CD8-positive, alpha-beta memory T cell (primary cell): ENCODE measurements at regions of chr1 and their contacts with region 1.

Region 1: DNA sequence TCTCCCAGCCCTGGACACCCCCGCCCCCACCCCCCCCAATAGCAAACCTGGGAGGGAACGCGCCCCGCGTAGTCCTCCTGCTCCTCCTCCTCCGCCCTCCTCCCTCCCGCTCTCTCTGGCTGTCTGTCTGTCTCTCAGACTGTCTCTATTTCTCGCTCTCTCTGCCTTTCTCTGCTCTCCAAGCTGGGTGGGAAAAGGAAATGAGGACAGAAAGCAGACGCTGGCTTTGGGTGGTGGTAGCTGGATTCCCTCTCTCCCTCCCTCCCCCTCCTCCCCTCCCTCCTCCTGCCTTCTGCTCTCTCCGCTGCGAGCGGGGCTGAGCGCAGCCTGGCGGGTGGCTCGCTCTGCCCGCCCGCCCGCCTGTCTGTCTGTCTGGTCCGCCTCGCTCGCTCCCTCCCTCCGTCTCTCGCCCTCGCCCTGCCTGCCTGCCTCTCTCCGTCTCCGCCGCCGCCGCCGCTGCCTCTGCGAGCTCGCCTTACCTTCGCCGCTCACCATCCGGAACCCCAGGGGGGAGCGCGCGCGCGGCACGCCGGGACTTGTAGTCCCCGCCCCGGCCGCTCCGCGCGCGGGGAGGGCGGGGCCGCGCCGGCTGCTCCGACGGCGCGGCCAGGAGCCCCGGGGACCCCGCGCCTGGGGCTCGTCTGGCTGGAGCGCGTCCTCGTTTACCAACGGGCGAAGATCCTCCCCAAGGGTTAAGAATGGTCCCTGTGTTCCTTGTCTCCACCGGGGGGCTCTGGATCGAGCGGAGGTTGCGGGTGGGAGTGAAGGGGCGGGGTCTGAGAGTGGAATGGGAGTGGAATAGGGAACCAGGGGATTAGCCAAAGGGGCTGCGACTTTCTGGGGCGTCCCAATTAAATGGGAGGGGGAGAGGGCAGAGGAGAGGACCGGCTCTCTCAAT is at the start of gene AHDC1:
- DNase-seq: peak; percentile 88 to 94 (median 90)
- H3K4me3 ChIP-seq: peak within 1 kb of the TSS; percentile 72
- H3K4me3 Mint-ChIP-seq: peak within 1 kb of the TSS; percentile 86 to 95 (median 91)
- H3K27ac ChIP-seq: peak within 1 kb of the TSS; percentile 81
- H3K27ac Mint-ChIP-seq: peak within 1 kb of the TSS; percentile 74 to 98 (median 92)
- H3K4me1 ChIP-seq: peaks cover 52% of the 10 kb centered on the region
- H3K4me1 Mint-ChIP-seq: peaks cover 36 to 58% (median 44%) of the 10 kb centered on the region in 3 donors
- H3K27me3 ChIP-seq: no peaks in the 10 kb centered on the region
- H3K27me3 Mint-ChIP-seq: no peaks in the 10 kb centered on the region
- total RNA-seq, gene AHDC1: 11.5 TPM

Region 2: GRCh38 chr1:27392096-27392777 is 211.7 kb before region 1 on chr1 and contains the start of gene GPR3:
- CTCF ChIA-PET with region 1: interaction called, 10 read pairs
- POLR2A ChIA-PET with region 1: no interaction called
- DNase-seq: peak; percentile 87 to 94 (median 92)
- H3K4me3 ChIP-seq: peak within 1 kb of the TSS; percentile 69
- H3K4me3 Mint-ChIP-seq: peak within 1 kb of the TSS; percentile 30 to 88 (median 86)
- H3K27ac ChIP-seq: peak within 1 kb of the TSS; percentile 43
- H3K27ac Mint-ChIP-seq: peak within 1 kb of the TSS in 7 of 8 donors; percentile 0 to 95 (median 93)
- H3K4me1 ChIP-seq: peaks cover 17% of the 10 kb centered on the region
- H3K4me1 Mint-ChIP-seq: peaks cover 15 to 22% (median 21%) of the 10 kb centered on the region in 3 donors
- H3K27me3 ChIP-seq: no peaks in the 10 kb centered on the region
- H3K27me3 Mint-ChIP-seq: peaks cover 1 to 12% of the 10 kb centered on the region in 2 donors
- total RNA-seq, gene GPR3: 3.3 to 3.9 TPM

Region 3: GRCh38 chr1:27556781-27557595 is 46.9 kb before region 1 on chr1:
- CTCF ChIA-PET with region 1: interaction called, 67 read pairs
- POLR2A ChIA-PET with region 1: interaction called, 3 read pairs
- DNase-seq: peak; percentile 58 to 82 (median 69)
- H3K4me3 ChIP-seq: peak overlapping the region; percentile 36
- H3K4me3 Mint-ChIP-seq: peak overlapping the region in 5 of 7 donors; percentile 1 to 42 (median 17)
- H3K27ac ChIP-seq: peak overlapping the region; percentile 25
- H3K27ac Mint-ChIP-seq: peak overlapping the region; percentile 12 to 82 (median 47)
- H3K4me1 ChIP-seq: peaks cover 26% of the 10 kb centered on the region
- H3K4me1 Mint-ChIP-seq: peaks cover 20 to 36% (median 20%) of the 10 kb centered on the region in 3 donors
- H3K27me3 ChIP-seq: no peaks in the 10 kb centered on the region
- H3K27me3 Mint-ChIP-seq: no peaks in the 10 kb centered on the region

Region 4: GRCh38 chr1:27583479-27583878 is 20.5 kb before region 1 on chr1:
- CTCF ChIA-PET with region 1: no interaction called
- POLR2A ChIA-PET with region 1: no interaction called
- DNase-seq: no peak
- H3K4me3 ChIP-seq: no peak overlapping the region
- H3K4me3 Mint-ChIP-seq: no peak overlapping the region
- H3K27ac ChIP-seq: no peak overlapping the region
- H3K27ac Mint-ChIP-seq: peak overlapping the region in 3 of 8 donors; percentile 34 to 77 (median 45)
- H3K4me1 ChIP-seq: no peaks in the 10 kb centered on the region
- H3K4me1 Mint-ChIP-seq: peaks cover 0 to 8% (median 7%) of the 10 kb centered on the region in 3 donors
- H3K27me3 ChIP-seq: no peaks in the 10 kb centered on the region
- H3K27me3 Mint-ChIP-seq: no peaks in the 10 kb centered on the region

Region 5: GRCh38 chr1:27616441-27616840 is 12.5 kb after region 1 on chr1:
- CTCF ChIA-PET with region 1: interaction called, 22 read pairs
- POLR2A ChIA-PET with region 1: interaction called, 3 read pairs
- DNase-seq: no peak
- H3K4me3 ChIP-seq: no peak overlapping the region
- H3K4me3 Mint-ChIP-seq: peak overlapping the region in 1 of 7 donors; percentile 38
- H3K27ac ChIP-seq: peak overlapping the region; percentile 13
- H3K27ac Mint-ChIP-seq: peak overlapping the region; percentile 73 to 97 (median 83)
- H3K4me1 ChIP-seq: peaks cover 65% of the 10 kb centered on the region
- H3K4me1 Mint-ChIP-seq: peaks cover 50 to 76% (median 57%) of the 10 kb centered on the region in 3 donors
- H3K27me3 ChIP-seq: no peaks in the 10 kb centered on the region
- H3K27me3 Mint-ChIP-seq: peaks cover 0 to 3% of the 10 kb centered on the region in 2 donors

Region 6: DNA sequence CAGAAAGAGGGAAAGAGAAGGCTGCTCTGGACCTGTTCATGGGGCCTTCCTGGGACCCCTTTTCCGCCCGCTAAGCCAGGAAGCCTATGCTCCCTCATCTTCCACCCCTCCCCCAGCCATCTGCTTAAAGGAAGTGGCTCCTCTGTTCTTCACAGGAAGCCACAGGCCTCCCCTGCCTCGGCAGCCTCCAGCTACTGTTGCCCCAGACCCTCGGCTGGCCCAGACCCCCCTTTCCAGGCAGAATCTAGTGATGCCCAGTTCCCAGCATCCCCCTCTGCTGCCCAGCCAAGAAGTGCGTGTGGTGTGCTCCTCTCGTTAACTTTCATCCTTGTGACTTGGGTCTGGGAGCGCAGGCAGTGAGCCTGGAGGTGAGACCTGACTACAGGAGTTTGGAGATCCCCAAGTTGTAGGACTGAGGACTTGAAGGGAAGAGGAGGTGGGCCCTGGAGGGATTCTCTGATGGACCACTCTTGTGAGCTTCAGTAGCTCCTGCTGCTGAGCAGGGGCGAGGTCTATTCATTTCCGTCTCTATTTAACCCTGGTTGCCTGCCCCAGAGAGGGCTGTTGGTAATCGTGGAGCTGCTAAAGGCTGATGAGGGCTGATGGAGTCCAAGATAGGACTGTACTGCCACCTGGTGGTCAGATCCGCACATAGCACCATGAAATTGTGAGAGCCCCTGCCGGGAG is 58.9 kb after region 1 on chr1:
- CTCF ChIA-PET with region 1: interaction called, 127 read pairs
- POLR2A ChIA-PET with region 1: interaction called, 12 read pairs
- DNase-seq: peak; percentile 81 to 91 (median 85)
- H3K4me3 ChIP-seq: peak overlapping the region; percentile 74
- H3K4me3 Mint-ChIP-seq: peak overlapping the region; percentile 64 to 89 (median 86)
- H3K27ac ChIP-seq: peak overlapping the region; percentile 81
- H3K27ac Mint-ChIP-seq: peak overlapping the region; percentile 97 to 99 (median 98)
- H3K4me1 ChIP-seq: peaks cover 48% of the 10 kb centered on the region
- H3K4me1 Mint-ChIP-seq: peaks cover 46 to 49% (median 48%) of the 10 kb centered on the region in 3 donors
- H3K27me3 ChIP-seq: no peaks in the 10 kb centered on the region
- H3K27me3 Mint-ChIP-seq: no peaks in the 10 kb centered on the region